Heart right ventricle (tissue), 16 donors: ENCODE measurements at regions of chr10 and their contacts with region 1.

Region 1: DNA sequence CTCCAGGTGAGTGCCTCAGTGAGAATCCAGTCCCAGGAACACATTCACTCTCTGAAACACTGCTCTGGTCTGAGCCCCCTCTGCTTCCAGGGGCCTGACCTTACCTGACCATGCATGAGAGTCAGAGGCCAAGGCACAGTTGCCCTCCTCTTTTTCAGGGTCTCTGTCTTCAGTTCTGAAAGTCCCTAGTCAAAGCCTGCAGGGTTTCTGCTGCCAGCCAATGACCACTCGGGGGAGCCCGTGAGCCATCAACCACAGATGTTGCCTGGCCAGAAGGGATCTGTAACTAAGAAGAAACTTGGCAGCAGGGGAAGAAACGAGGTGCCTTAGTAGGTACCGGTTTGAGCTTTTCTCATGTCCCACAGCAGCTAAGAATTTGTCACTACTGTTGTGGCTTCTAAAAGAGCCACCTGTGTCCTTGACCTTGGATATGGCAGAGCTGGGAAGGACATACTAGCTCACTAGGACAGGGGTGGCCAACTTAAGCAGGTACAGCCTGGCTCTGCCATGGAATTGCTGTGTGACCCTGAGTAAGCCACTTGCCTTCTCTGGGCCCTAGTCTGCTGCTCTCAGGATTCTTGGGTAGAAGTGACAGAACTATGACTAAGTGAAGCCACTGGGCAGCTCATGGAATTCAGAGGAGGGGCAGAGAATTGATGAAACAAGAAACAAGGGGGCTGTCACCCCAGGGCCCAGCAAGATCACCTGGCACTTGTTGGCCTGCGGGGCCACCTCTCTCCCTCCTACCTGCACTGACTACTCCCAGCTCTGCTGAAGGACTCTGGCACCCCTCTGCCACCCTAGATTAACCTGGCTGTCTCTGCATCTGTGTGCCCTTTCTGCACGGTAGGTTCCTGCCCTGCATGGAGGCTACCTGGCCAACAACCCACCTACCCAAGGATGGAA is 83.8 kb upstream of the GPR26 start:
- DNase-seq: peak; percentile 72 to 73
- ATAC-seq: peak; percentile 43 to 81 (median 67)
- H3K4me3 ChIP-seq: no peak overlapping the region
- H3K27ac ChIP-seq: no peak overlapping the region
- H3K4me1 ChIP-seq: peaks cover 0 to 13% (median 7%) of the 10 kb centered on the region in 9 donors
- H3K27me3 ChIP-seq: peaks cover 0 to 71% (median 46%) of the 10 kb centered on the region in 7 donors
- CTCF ChIP-seq: peak; percentile 66 to 91 (median 80)

Region 2: GRCh38 chr10:123485341-123485960 is 96.9 kb before region 1 on chr10:
- intact Hi-C with region 1: no loop called
- DNase-seq: no peak
- ATAC-seq: no peak
- H3K4me3 ChIP-seq: no peak overlapping the region
- H3K27ac ChIP-seq: no peak overlapping the region
- H3K4me1 ChIP-seq: no peaks in the 10 kb centered on the region
- H3K27me3 ChIP-seq: peaks cover 0 to 28% (median 6%) of the 10 kb centered on the region in 7 donors
- CTCF ChIP-seq: no peak

Region 3: GRCh38 chr10:123967396-123968243 is 385.3 kb after region 1 on chr10:
- intact Hi-C with region 1: loop called (anchors 1 to 5 kb)
- DNase-seq: peak; percentile 64 to 72
- ATAC-seq: peak; percentile 64 to 88 (median 74)
- H3K4me3 ChIP-seq: peak overlapping the region in 2 of 10 donors; percentile 4 to 7
- H3K27ac ChIP-seq: no peak overlapping the region
- H3K4me1 ChIP-seq: peaks cover 0 to 10% (median 2%) of the 10 kb centered on the region in 9 donors
- H3K27me3 ChIP-seq: peaks cover 7 to 81% (median 75%) of the 10 kb centered on the region in 7 donors
- CTCF ChIP-seq: peak; percentile 61 to 93 (median 90)

Region 4: DNA sequence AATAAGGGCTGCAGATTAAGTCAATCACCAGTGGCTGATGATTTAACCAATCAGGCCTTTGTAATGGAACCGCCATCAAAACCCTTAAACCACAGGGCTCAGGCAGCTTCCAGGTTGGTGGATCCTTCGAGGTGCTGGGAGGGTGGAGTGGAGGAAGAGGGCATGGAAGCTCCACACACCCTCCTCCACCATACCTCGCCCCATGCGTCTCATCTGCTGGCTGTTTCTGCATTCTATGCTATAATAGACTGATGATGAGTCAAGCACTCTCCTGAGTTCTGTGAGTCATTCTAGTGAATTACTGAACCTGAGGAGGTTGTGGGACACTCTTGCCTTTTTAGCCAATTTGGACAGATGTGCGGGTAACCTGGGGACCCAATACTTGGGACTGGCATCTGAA is 467.1 kb after region 1 on chr10:
- intact Hi-C with region 1: no loop called
- DNase-seq: no peak
- ATAC-seq: no peak
- H3K4me3 ChIP-seq: no peak overlapping the region
- H3K27ac ChIP-seq: no peak overlapping the region
- H3K4me1 ChIP-seq: peaks cover 0 to 14% (median 0%) of the 10 kb centered on the region in 9 donors
- H3K27me3 ChIP-seq: no peaks in the 10 kb centered on the region
- CTCF ChIP-seq: no peak

Region 5: DNA sequence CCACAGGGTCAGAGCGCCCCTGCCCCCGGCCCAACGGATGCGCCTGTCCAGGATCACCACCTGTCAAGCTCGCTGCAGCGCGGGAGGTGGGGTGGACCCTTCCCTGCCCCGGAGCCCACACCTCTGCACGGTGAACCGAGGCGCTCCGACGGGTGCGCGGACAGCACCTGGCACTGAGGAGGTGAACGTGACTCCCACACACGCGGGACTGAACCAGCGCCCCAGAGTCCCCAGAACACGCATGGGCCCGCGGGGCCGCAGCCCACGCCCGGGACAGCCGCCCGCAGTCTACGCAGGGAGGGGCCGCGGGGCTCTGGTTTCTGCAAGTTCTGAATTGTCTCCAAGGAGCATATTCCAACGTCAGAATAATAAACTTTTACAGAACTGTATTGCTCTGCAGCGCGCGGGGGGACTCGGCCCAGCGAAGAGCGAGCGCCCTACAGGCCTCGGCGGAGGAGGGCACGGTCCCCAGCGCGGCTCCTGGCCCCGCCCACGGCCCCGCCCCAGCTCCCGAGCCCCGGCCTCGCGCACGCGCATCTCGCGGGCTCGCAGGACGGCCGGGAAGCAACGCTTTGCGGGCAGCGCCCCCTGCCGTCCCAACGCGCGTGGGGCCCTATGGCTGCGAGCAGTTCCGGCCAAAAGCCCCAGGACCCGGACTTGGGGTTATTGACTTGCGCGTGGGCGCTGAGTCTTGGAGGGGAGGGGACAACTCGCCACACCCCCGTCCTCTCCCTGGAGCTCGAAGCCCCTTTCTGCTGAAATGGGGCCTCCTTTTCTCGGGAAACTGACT is 806.7 kb after region 1 on chr10:
- intact Hi-C with region 1: loop called in 4 of 10 experiments (anchors 5 to 10 kb)
- DNase-seq: peak; percentile 85 to 93
- ATAC-seq: peak; percentile 97 to 100 (median 99)
- H3K4me3 ChIP-seq: peak overlapping the region; percentile 40 to 72 (median 60)
- H3K27ac ChIP-seq: peak overlapping the region in 3 of 10 donors; percentile 19 to 79 (median 24)
- H3K4me1 ChIP-seq: peaks cover 0 to 12% (median 6%) of the 10 kb centered on the region in 9 donors
- H3K27me3 ChIP-seq: peaks cover 0 to 5% (median 0%) of the 10 kb centered on the region in 7 donors
- CTCF ChIP-seq: peak; percentile 82 to 99 (median 98)

Region 6: DNA sequence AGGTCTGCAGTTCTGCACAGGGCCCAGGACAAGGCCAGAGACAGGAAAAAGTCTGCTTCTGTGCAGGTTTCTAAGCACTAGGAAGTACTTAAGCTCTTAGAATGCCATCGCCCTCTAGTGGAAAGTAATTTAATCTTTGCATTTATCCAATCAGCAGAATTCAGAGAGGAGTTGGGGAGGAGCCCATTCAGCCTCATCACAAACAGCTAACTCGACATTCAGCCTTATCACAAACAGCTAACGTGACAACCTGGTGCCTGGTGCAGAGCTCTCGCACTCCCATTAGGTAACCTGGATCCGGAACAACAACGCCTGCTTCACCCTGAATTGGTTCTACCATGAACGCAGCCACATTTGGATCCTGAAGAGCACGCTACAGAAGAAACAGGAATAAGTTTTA is 821.2 kb after region 1 on chr10:
- intact Hi-C with region 1: loop called in 1 of 10 experiments (anchors 5 kb)
- DNase-seq: peak in 1 of 2 donors; percentile 41
- ATAC-seq: peak; percentile 79 to 90 (median 88)
- H3K4me3 ChIP-seq: no peak overlapping the region
- H3K27ac ChIP-seq: no peak overlapping the region
- H3K4me1 ChIP-seq: peaks cover 0 to 10% (median 4%) of the 10 kb centered on the region in 9 donors
- H3K27me3 ChIP-seq: no peaks in the 10 kb centered on the region
- CTCF ChIP-seq: peak; percentile 26 to 70 (median 63)